Left cardiac atrium (tissue), 4 donors: ENCODE measurements at regions of chr6 and their contacts with region 1.

Region 1: GRCh38 chr6:35139908-35140655 is 1.1 kb downstream of the TCP11 start:
- DNase-seq: peak; percentile 49
- ATAC-seq: peak; percentile 50 to 64

Region 2: DNA sequence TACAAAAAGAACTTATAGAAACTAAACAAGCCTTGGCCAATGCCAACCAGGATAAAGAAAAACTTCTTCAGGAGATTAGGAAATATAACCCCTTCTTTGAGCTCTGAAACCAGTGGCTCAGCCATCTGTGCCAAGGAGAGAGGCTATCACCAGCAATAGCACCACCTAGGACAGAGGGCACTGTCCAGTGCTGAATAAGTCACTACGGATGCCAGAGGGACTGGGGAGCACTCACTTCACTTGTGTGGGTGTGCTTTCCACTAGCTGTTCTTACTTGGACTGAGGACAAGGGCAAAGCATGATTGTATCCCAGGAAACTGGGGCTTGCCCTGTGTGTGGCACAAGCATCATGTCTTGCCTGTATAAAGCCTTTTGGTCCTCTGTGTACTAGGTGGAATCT is 267.8 kb before region 1 on chr6:
- intact Hi-C with region 1: loop called in 1 of 2 experiments (anchors 10 kb)
- DNase-seq: no peak
- ATAC-seq: no peak

Region 3: DNA sequence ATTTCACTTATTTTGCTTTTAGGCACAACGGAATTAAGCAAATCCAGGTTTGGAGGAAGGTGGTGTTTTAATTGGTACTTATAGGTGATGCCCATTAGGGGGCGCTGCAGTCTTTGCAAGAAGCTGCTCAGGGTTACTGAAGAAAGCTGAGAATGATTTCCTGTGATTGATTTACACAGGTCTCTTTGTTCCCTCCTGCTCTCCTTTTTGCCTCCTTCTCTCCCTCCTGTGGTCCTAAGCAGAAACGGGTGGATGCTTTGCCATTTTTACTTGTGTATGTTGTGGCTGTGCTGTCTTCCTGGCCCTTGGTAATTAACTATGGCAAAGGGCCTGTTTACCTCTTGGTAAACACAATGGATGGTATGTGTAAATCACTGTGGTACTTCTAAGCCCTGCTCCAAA is 153.2 kb before region 1 on chr6:
- intact Hi-C with region 1: loop called (anchors 1 to 5 kb)
- DNase-seq: peak; percentile 76
- ATAC-seq: peak; percentile 79 to 80

Region 4: DNA sequence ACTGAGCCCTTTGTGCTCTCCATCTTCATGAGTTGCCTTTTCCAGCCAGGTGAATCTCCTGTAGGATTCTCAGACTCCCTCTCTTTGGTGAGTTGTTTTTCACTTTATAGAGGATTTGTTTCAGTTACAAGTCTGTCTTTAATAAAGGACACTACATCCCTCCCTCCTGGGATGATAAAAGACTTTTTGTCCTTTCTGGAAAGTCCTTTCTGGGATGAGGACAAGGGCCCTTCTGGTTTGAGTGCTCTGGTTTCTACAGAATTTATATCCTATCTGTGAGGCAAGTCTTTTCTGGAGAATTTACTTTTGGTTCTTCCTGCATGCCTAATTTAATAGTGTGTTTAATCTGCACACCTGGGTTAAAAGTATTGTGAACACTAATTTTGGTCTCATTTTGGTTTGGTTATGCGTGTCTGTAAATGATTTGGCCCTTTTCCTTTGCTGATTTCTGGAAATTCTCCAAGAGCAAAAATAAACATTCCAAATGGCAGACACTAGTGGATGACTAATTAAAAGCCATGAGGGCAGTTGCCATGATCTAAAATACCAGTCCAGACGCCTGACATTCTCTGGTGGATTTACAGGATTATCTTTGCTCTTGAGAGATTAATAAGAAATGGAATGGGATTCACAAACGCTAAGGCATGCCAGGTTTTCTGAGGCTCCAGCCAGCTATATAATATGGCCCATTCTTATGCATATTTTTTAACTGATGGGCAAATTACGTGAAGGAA is 43.8 kb before region 1 on chr6:
- intact Hi-C with region 1: no loop called
- DNase-seq: no peak
- ATAC-seq: peak; percentile 61 to 68

Region 5: GRCh38 chr6:35202066-35202546 is 62.0 kb after region 1 on chr6:
- intact Hi-C with region 1: loop called in 1 of 2 experiments (anchors 10 kb)
- DNase-seq: no peak
- ATAC-seq: peak; percentile 47 to 58

Region 6: GRCh38 chr6:35240840-35241801 is 101.0 kb after region 1 on chr6:
- intact Hi-C with region 1: loop called in 1 of 2 experiments (anchors 10 kb)
- DNase-seq: peak; percentile 68
- ATAC-seq: peak; percentile 43 to 65